Activated CD8-positive, alpha-beta T cell treated with anti-CD3 and anti-CD28 coated beads for 36 hours (primary cell): ENCODE measurements at regions of chr2 and their contacts with region 1.

Region 1: DNA sequence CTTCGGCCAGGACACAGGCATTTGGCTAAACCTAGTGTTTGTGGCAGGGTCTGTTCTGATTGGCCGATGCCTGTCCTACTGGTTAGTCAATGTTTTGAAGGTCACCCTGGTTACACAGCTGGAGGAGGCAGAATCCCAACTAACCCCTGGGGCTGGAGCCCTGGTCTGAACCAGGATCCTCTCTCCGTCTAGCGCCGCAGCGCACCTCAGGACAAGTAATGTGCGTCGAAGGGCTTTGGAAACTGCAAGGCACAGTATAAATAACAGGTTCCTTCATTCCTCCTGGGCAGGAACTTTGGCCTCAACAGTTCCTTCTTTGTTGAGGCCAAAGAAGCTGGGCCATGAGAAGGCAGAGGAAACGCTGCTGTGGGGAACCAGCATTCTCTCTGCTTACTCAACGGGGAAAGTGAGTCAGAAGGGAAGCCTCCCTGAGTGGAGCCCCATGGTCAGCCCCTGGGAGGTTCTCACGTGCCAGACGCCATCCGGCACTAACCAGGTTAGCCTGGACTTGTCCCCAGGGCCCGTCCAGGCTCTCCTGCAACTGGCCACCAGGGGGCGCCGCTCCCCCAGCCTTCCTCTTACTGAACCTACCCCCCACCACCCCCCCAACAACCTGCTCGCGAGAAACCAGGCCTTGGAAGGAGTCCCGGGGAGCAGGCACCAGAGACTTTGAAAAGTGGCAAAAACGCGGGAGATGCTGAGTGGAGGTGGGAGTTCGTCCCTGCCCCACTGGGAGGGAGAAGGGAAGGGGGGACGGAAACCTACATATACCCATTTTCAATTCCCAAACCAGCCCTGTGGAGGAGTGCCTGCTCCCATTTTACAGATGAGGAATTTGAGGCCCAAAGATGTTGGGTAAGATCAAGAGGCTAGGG is 19.8 kb downstream of the TEX44 start:
- DNase-seq: peak; percentile 99
- ATAC-seq: peak; percentile 55
- H3K4me3 Mint-ChIP-seq: peak overlapping the region; percentile 87
- H3K27ac Mint-ChIP-seq: peak overlapping the region; percentile 97
- H3K4me1 Mint-ChIP-seq: peaks cover 46% of the 10 kb centered on the region
- H3K27me3 Mint-ChIP-seq: no peaks in the 10 kb centered on the region
- CTCF ChIP-seq: peak; percentile 71

Region 2: GRCh38 chr2:231463698-231464575 is 148.5 kb before region 1 on chr2 and contains the start of gene NCL:
- CTCF ChIA-PET with region 1: interaction called, 7 read pairs
- POLR2A ChIA-PET with region 1: interaction called, 44 read pairs
- intact Hi-C with region 1: no loop called
- DNase-seq: peak; percentile 89
- ATAC-seq: peak; percentile 47
- H3K4me3 Mint-ChIP-seq: peak within 1 kb of the TSS; percentile 100
- H3K27ac Mint-ChIP-seq: peak within 1 kb of the TSS; percentile 98
- H3K4me1 Mint-ChIP-seq: peaks cover 38% of the 10 kb centered on the region
- H3K27me3 Mint-ChIP-seq: no peaks in the 10 kb centered on the region
- CTCF ChIP-seq: no peak
- total RNA-seq, gene NCL: 1,312 to 1,361 TPM

Region 3: DNA sequence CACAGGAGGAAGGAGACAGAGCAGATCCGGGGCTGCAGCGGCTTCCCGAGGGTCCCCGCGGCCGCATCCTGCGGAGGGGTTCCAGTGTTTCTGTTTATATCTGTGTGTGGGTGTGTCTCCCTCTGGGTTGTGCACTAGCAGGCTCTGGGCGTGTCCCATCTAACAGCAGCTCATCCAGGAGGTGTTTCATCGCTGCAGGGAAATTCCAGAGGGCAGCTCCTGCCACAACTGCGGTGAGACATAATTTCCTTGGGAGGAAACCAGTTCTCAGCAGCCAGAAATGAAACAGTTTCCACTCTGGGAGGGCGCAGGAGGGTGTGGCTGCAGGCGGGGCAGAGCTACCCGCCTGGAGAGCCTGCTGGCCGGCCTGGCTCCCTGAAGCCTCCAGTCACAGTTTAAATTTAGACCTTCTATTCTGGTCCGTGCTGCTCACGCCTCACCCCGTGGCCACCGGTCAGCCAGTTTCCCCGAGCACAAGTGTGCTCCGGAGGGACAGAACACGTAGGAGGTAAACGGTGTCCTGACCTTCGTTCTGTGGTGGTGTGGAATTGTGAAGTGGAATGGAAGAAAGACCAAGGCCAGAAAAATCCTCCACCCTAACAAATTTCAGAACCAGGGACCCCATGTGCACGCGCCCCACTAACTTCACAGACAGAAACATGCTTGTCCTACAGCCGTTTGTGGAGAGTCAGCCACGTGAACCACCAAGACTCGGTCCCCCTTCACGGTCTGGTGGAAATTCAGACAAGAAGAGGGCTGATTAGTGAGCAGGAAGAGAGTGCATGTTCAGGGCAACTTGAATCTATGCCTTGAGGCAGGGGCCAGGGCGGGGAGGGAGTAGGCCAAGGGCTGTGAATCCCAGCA is 30.4 kb after region 1 on chr2:
- CTCF ChIA-PET with region 1: interaction called, 24 read pairs
- POLR2A ChIA-PET with region 1: interaction called, 10 read pairs
- intact Hi-C with region 1: no loop called
- DNase-seq: peak; percentile 81
- ATAC-seq: peak; percentile 91
- H3K4me3 Mint-ChIP-seq: peak overlapping the region; percentile 51
- H3K27ac Mint-ChIP-seq: peak overlapping the region; percentile 80
- H3K4me1 Mint-ChIP-seq: peaks cover 13% of the 10 kb centered on the region
- H3K27me3 Mint-ChIP-seq: no peaks in the 10 kb centered on the region
- CTCF ChIP-seq: no peak

Region 4: GRCh38 chr2:231662028-231662810 is 49.8 kb after region 1 on chr2:
- CTCF ChIA-PET with region 1: interaction called, 5 read pairs
- POLR2A ChIA-PET with region 1: interaction called, 46 read pairs
- intact Hi-C with region 1: no loop called
- DNase-seq: peak; percentile 96
- ATAC-seq: peak; percentile 93
- H3K4me3 Mint-ChIP-seq: peak overlapping the region; percentile 70
- H3K27ac Mint-ChIP-seq: peak overlapping the region; percentile 95
- H3K4me1 Mint-ChIP-seq: peaks cover 27% of the 10 kb centered on the region
- H3K27me3 Mint-ChIP-seq: no peaks in the 10 kb centered on the region
- CTCF ChIP-seq: no peak

Region 5: GRCh38 chr2:231680992-231681853 is 68.8 kb after region 1 on chr2:
- CTCF ChIA-PET with region 1: interaction called, 236 read pairs
- POLR2A ChIA-PET with region 1: interaction called, 116 read pairs
- intact Hi-C with region 1: no loop called
- DNase-seq: no peak
- ATAC-seq: peak; percentile 21
- H3K4me3 Mint-ChIP-seq: peak overlapping the region; percentile 47
- H3K27ac Mint-ChIP-seq: peak overlapping the region; percentile 34
- H3K4me1 Mint-ChIP-seq: peaks cover 3% of the 10 kb centered on the region
- H3K27me3 Mint-ChIP-seq: peaks cover 19% of the 10 kb centered on the region
- CTCF ChIP-seq: no peak

Region 6: DNA sequence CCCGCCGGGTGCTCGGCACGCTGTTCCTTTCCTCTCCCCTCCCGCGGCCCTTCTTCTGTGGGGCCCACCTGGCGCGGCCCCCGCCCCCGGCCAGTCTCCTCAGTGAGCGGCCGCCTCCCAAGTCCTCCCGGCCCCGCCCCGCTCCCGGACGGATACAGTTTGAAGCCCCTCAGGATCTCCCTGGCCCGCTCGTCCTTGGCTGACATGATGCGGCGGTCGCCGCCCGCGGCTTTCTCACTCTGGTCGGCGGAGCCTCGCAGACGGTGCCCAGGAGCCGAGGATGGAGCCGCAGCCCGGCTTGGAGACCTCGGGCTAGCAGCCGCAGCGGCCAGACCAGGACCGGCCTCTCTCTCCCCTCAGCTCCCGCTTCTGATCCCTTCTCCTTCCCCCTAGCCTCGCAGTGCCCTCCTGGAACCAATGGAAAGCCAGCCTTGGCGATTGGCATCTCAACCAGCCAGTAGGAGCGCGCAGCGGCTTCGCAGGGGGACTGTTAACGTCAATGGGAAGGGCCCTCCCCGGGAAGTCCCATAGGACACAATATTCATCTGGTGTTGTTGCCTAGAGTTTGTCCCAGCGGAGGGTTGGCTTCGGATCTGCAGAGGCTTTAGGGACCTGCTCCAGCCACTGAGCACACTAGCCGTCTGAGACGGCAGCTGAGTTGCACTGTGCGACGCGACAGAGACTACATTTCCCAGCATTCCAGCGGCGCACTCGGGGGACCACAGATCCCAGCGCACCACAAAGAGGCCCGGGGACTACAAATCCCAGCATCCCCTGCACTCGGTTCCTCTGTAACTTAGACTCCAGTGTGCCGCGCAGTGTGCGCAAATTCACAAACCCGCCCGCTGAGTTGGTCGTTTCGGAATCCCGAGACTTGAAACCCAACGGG is 168.7 kb after region 1 on chr2 and contains the start of gene PDE6D:
- CTCF ChIA-PET with region 1: interaction called, 4 read pairs
- POLR2A ChIA-PET with region 1: interaction called, 13 read pairs
- intact Hi-C with region 1: loop called (anchors 5 kb)
- DNase-seq: peak; percentile 98
- ATAC-seq: peak; percentile 90
- H3K4me3 Mint-ChIP-seq: peak within 1 kb of the TSS; percentile 86
- H3K27ac Mint-ChIP-seq: peak within 1 kb of the TSS; percentile 95
- H3K4me1 Mint-ChIP-seq: peaks cover 50% of the 10 kb centered on the region
- H3K27me3 Mint-ChIP-seq: no peaks in the 10 kb centered on the region
- CTCF ChIP-seq: no peak
- total RNA-seq, gene PDE6D: 22.8 to 23.5 TPM

Region 7: GRCh38 chr2:232042911-232043564 is 430.6 kb after region 1 on chr2:
- CTCF ChIA-PET with region 1: no interaction called
- POLR2A ChIA-PET with region 1: no interaction called
- intact Hi-C with region 1: no loop called
- DNase-seq: peak; percentile 4
- ATAC-seq: peak; percentile 39
- H3K4me3 Mint-ChIP-seq: no peak overlapping the region
- H3K27ac Mint-ChIP-seq: no peak overlapping the region
- H3K4me1 Mint-ChIP-seq: peaks cover 18% of the 10 kb centered on the region
- H3K27me3 Mint-ChIP-seq: no peaks in the 10 kb centered on the region
- CTCF ChIP-seq: no peak